GM23248 (cell line): ENCODE measurements at regions of chr16 and their contacts with region 1.

Region 1: DNA sequence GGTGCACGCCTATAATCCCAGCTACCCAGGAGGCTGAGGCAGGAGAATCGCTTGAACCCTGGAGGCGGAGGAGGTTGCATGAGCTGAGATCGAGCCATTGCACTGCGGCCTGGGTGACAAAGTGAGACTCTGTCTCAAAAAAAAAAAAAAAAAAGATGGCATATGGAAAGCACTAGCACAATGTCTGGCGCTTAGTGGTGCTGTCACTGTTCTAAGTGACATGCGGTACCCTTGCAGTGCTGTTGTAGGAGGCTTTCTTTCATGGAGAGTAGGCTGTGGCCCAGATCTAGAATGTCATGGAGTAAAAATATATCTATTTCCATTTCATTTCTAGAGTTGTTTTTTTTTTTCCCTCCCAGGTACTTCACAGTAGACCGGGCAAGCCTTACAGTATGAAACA is 14.6 kb upstream of the METTL9 start:
- DNase-seq: no peak
- H3K4me3 ChIP-seq: no peak overlapping the region
- H3K27ac ChIP-seq: no peak overlapping the region
- H3K4me1 ChIP-seq: peaks cover 18% of the 10 kb centered on the region
- H3K27me3 ChIP-seq: no peaks in the 10 kb centered on the region

Region 2: DNA sequence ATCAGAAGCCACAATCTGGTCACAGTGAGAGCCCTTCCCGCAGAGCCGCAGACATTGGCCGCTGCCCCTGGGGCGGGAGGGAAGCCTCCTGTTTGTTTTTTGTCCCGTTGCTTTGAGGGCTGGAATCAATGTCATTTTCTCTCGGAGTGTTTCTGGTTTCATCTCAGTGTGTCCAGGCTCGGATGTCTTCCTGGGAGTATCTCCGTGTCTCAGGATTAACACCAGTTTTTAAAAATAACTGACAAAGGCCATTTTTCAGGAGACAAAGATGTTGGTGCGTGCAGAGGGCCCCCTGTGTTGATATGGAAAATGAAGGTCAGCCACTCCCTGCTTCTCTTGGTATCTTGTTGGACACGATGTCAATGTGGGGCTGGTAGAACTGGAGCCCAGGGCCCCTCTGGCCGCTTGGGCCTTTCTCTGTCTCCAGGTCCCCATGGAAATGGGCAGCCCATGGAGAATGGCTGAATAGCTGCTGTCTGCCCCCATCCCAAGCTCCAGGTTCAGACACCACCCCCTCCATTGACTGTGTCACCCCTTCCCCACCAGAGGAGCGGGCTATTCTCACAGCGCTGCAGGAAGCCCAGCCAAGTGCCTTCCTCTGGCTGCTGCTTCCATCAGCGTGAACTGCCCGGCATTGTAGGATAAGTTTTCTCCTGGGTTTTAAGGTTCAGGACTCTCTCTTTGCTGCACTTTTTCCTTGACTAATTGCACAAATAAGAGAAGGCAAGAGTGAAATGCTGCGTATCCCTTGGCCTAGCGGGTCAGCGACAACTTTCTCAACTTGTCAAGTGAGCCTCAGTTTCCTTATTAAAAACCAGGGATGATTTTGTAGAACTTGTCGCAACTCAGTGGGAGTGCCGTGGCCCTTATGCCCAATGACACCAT is 57.7 kb before region 1 on chr16:
- in situ Hi-C with region 1: no loop called
- DNase-seq: no peak
- H3K4me3 ChIP-seq: no peak overlapping the region
- H3K27ac ChIP-seq: no peak overlapping the region
- H3K4me1 ChIP-seq: peaks cover 7% of the 10 kb centered on the region
- H3K27me3 ChIP-seq: no peaks in the 10 kb centered on the region

Region 3: DNA sequence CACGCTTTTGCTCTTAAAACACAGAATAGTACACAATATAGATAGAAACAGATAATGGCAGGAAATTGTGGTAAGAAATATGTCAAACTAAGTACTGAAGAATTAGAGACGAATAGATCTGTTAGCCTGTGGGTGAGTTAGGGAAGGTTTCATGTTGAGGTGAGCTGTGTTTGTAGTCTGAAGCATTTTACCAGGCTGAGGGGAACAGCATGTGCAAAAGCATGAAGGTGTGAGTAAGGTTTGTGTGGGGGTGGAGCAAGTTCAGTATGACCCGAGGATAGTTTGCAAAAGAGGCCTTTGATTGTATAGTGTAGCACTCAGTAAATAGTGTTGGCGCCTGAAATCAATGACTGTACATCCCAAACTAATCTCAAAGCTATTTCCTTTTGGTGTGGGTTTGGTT is 53.8 kb after region 1 on chr16:
- in situ Hi-C with region 1: loop called (anchors 5 kb)
- DNase-seq: peak; percentile 92
- H3K4me3 ChIP-seq: peak overlapping the region; percentile 57
- H3K27ac ChIP-seq: peak overlapping the region; percentile 83
- H3K4me1 ChIP-seq: peaks cover 58% of the 10 kb centered on the region
- H3K27me3 ChIP-seq: no peaks in the 10 kb centered on the region

Region 4: GRCh38 chr16:22694887-22695382 is 1110.1 kb after region 1 on chr16:
- in situ Hi-C with region 1: loop called (anchors 5 kb)
- DNase-seq: peak; percentile 99
- H3K4me3 ChIP-seq: peak overlapping the region; percentile 53
- H3K27ac ChIP-seq: peak overlapping the region; percentile 63
- H3K4me1 ChIP-seq: peaks cover 36% of the 10 kb centered on the region
- H3K27me3 ChIP-seq: no peaks in the 10 kb centered on the region